ENCODE measurements at regions of chr7 and their contacts with region 1.

Region 1: GRCh38 chr7:15561835-15562234 is at the start of gene AGMO:
- DNase-seq: peak; percentile 39
- ATAC-seq: peak; percentile 71
- H3K4me3 ChIP-seq: peak within 1 kb of the TSS in 2 of 3 experiments; percentile 18 to 35; a peak in 4 of 6 replicates
- H3K27ac ChIP-seq: peak within 1 kb of the TSS; percentile 57
- H3K4me1 ChIP-seq: no peaks in the 10 kb centered on the region
- H3K27me3 ChIP-seq: no peaks in the 10 kb centered on the region
- CTCF ChIP-seq: no peak
- EP300 ChIP-seq: no peak
- POLR2A ChIP-seq: no peak
- RAD21 ChIP-seq: no peak
- total RNA-seq, gene AGMO: 0.22 TPM in 1 of 2 replicates, not detected in the other

Region 2: DNA sequence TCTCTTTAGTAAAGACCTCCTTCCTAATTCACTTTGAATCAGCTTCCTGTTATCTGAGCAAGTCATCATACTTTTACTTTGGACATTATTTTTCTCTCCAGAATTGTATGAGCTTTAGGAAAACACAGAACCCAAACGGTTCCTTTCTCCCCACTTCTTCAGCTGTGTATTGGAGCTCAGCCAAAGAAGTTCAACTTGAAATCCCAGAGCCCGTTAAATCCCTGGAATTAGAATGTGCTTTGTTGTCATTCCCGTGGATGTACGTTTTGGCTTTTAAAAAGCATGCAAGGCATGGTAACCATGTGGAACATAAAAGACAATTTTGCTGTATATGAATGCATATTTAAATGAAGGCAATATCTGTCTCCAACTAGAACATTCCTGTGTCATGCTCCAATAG is 46.6 kb before region 1 on chr7:
- CTCF ChIA-PET with region 1: no interaction called
- POLR2A ChIA-PET with region 1: no interaction called
- in situ Hi-C with region 1: no loop called
- intact Hi-C with region 1: no loop called
- DNase-seq: no peak
- ATAC-seq: no peak
- H3K4me3 ChIP-seq: no peak overlapping the region
- H3K27ac ChIP-seq: no peak overlapping the region
- H3K4me1 ChIP-seq: no peaks in the 10 kb centered on the region
- H3K27me3 ChIP-seq: no peaks in the 10 kb centered on the region
- CTCF ChIP-seq: no peak
- EP300 ChIP-seq: no peak
- POLR2A ChIP-seq: no peak
- RAD21 ChIP-seq: no peak

Region 3: GRCh38 chr7:15581352-15581951 is 19.6 kb after region 1 on chr7:
- CTCF ChIA-PET with region 1: no interaction called
- POLR2A ChIA-PET with region 1: no interaction called
- in situ Hi-C with region 1: no loop called
- intact Hi-C with region 1: no loop called
- DNase-seq: no peak
- ATAC-seq: no peak
- H3K4me3 ChIP-seq: no peak overlapping the region
- H3K27ac ChIP-seq: no peak overlapping the region
- H3K4me1 ChIP-seq: no peaks in the 10 kb centered on the region
- H3K27me3 ChIP-seq: no peaks in the 10 kb centered on the region
- CTCF ChIP-seq: no peak
- EP300 ChIP-seq: no peak
- POLR2A ChIP-seq: no peak
- RAD21 ChIP-seq: no peak

Region 4: DNA sequence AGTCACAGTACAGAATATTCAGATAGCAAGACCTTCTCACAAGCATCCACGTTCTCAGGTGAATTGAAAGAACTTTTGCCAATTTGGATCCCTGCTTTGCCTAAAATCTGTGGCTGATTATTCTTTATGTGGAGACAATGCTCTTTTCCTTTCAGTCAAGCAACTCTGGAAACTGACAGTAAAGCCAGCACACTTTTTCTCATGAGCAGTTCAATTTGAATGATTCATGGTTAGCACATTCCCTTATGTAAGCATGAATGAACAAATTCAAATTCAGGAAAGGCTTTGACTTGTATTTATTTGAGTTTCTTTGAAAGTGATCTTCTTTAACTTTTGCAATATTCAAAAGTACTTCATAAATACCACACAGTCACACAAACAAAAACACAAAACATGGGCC is 67.0 kb after region 1 on chr7:
- CTCF ChIA-PET with region 1: no interaction called
- POLR2A ChIA-PET with region 1: no interaction called
- in situ Hi-C with region 1: no loop called
- intact Hi-C with region 1: loop called (anchors 10 kb)
- DNase-seq: no peak
- ATAC-seq: no peak
- H3K4me3 ChIP-seq: no peak overlapping the region
- H3K27ac ChIP-seq: no peak overlapping the region
- H3K4me1 ChIP-seq: no peaks in the 10 kb centered on the region
- H3K27me3 ChIP-seq: no peaks in the 10 kb centered on the region; a peak in 1 of 5 replicates
- CTCF ChIP-seq: no peak
- EP300 ChIP-seq: no peak
- POLR2A ChIP-seq: no peak
- RAD21 ChIP-seq: no peak

Measured in HepG2 (cell line).